B cell (primary cell): ENCODE measurements at regions of chr6 and their contacts with region 1.

Region 1: DNA sequence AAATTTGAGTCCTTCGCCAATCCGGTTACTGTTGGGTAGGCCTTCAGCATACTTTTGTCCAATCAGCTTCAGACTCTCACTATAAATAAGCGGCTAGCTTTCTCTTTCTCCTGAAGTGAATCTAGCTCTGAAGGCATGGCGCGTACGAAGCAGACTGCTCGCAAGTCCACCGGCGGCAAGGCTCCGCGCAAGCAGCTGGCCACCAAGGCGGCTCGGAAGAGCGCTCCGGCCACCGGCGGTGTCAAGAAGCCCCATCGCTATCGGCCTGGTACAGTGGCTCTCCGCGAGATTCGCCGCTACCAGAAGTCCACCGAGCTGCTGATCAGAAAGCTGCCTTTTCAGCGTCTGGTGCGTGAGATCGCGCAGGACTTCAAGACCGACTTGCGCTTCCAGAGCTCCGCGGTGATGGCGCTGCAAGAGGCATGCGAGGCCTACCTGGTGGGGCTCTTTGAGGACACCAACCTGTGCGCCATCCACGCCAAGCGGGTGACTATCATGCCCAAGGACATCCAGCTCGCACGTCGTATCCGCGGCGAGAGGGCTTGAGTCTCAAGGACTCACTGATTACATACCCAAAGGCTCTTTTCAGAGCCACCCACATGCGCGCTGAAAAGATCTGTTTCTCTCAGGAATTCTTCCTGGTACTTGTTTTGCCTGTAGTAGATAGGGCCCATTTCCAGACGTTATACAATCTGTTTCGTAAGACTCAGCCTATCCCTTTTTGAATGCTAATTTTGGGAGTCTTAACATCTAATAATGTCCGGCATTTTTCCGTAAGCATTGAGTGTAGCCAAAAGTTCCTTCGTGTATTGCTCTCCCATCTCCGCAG is 102.0 kb downstream of the OR2B2 start:
- DNase-seq: peak; percentile 96
- ATAC-seq: peak; percentile 50
- H3K4me3 ChIP-seq: peak overlapping the region; percentile 66 to 94 (median 84)
- H3K4me3 Mint-ChIP-seq: peak overlapping the region; percentile 98
- H3K27ac ChIP-seq: peak overlapping the region; percentile 82
- H3K27ac Mint-ChIP-seq: peak overlapping the region; percentile 99
- H3K4me1 ChIP-seq: peaks cover 37 to 47% of the 10 kb centered on the region in 2 donors
- H3K4me1 Mint-ChIP-seq: peaks cover 58% of the 10 kb centered on the region
- H3K27me3 ChIP-seq: no peaks in the 10 kb centered on the region
- H3K27me3 Mint-ChIP-seq: no peaks in the 10 kb centered on the region
- CTCF ChIP-seq: no peak

Region 2: GRCh38 chr6:26031595-26032339 is 1778.4 kb before region 1 on chr6:
- CTCF ChIA-PET with region 1: no interaction called
- POLR2A ChIA-PET with region 1: no interaction called
- intact Hi-C with region 1: loop called (anchors 2 kb)
- DNase-seq: peak; percentile 90
- ATAC-seq: peak; percentile 63
- H3K4me3 ChIP-seq: peak overlapping the region; percentile 67 to 85 (median 69)
- H3K4me3 Mint-ChIP-seq: peak overlapping the region; percentile 96
- H3K27ac ChIP-seq: peak overlapping the region; percentile 76 to 78
- H3K27ac Mint-ChIP-seq: peak overlapping the region; percentile 87
- H3K4me1 ChIP-seq: peaks cover 26 to 36% of the 10 kb centered on the region in 2 donors
- H3K4me1 Mint-ChIP-seq: peaks cover 46% of the 10 kb centered on the region
- H3K27me3 ChIP-seq: no peaks in the 10 kb centered on the region
- H3K27me3 Mint-ChIP-seq: no peaks in the 10 kb centered on the region
- CTCF ChIP-seq: no peak

Region 3: GRCh38 chr6:26329763-26330511 is 1480.2 kb before region 1 on chr6:
- CTCF ChIA-PET with region 1: no interaction called
- POLR2A ChIA-PET with region 1: no interaction called
- intact Hi-C with region 1: loop called (anchors 5 kb)
- DNase-seq: peak; percentile 63
- ATAC-seq: no peak
- H3K4me3 ChIP-seq: no peak overlapping the region
- H3K4me3 Mint-ChIP-seq: peak overlapping the region; percentile 64
- H3K27ac ChIP-seq: no peak overlapping the region
- H3K27ac Mint-ChIP-seq: peak overlapping the region; percentile 73
- H3K4me1 ChIP-seq: peaks cover 23 to 27% of the 10 kb centered on the region in 2 donors
- H3K4me1 Mint-ChIP-seq: peaks cover 26% of the 10 kb centered on the region
- H3K27me3 ChIP-seq: peaks cover 0 to 63% (median 62%) of the 10 kb centered on the region in 4 experiments
- H3K27me3 Mint-ChIP-seq: peaks cover 61% of the 10 kb centered on the region
- CTCF ChIP-seq: no peak

Region 4: DNA sequence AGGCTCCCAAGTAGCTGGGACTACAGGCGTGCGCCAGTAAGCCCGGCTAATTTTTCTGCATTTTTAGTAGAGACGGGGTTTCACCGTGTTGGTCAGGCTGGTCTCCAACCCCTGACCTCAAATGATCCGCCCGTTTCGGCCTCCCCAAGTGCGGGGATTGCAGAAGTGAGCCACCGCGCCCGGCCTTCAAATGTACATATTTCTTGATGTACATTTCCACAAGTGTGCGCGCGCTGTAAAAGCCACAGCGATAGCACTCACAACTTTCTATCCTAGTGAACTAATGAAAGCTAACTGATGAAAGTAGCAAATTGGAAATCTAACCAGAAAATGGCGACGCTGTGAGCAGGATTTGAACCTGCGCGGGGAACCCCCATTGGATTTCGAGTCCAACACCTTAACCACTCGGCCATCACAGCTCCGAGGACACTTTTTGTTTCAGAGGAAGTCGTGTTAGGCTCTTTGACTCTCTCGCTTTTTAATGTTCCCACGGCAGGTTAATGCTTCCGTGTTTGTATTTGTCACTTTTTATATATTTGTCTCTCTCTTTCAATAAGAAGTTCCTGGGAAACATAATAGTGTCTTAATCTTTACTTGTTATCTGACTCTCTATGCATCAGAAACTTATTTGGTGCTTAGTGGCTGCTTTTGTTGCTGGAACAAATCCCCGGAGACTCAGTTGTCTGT is 137.9 kb before region 1 on chr6:
- CTCF ChIA-PET with region 1: no interaction called
- POLR2A ChIA-PET with region 1: no interaction called
- intact Hi-C with region 1: loop called (anchors 5 kb)
- DNase-seq: peak; percentile 48
- ATAC-seq: no peak
- H3K4me3 ChIP-seq: peak overlapping the region in 1 of 5 experiments; percentile 24
- H3K4me3 Mint-ChIP-seq: peak overlapping the region; percentile 23
- H3K27ac ChIP-seq: no peak overlapping the region
- H3K27ac Mint-ChIP-seq: peak overlapping the region; percentile 41
- H3K4me1 ChIP-seq: peaks cover 21 to 22% of the 10 kb centered on the region in 2 donors
- H3K4me1 Mint-ChIP-seq: peaks cover 27% of the 10 kb centered on the region
- H3K27me3 ChIP-seq: peaks cover 0 to 75% (median 61%) of the 10 kb centered on the region in 4 experiments
- H3K27me3 Mint-ChIP-seq: peaks cover 71% of the 10 kb centered on the region
- CTCF ChIP-seq: no peak

Region 5: GRCh38 chr6:27795697-27796494 is 14.3 kb before region 1 on chr6:
- CTCF ChIA-PET with region 1: interaction called, 64 read pairs
- POLR2A ChIA-PET with region 1: no interaction called
- intact Hi-C with region 1: loop called (anchors 1 kb)
- DNase-seq: peak; percentile 89
- ATAC-seq: peak; percentile 59
- H3K4me3 ChIP-seq: no peak overlapping the region
- H3K4me3 Mint-ChIP-seq: no peak overlapping the region
- H3K27ac ChIP-seq: no peak overlapping the region
- H3K27ac Mint-ChIP-seq: peak overlapping the region; percentile 17
- H3K4me1 ChIP-seq: peaks cover 19 to 25% of the 10 kb centered on the region in 2 donors
- H3K4me1 Mint-ChIP-seq: peaks cover 22% of the 10 kb centered on the region
- H3K27me3 ChIP-seq: peaks cover 0 to 10% (median 5%) of the 10 kb centered on the region in 4 experiments
- H3K27me3 Mint-ChIP-seq: peaks cover 12% of the 10 kb centered on the region
- CTCF ChIP-seq: peak; percentile 84

Region 6: GRCh38 chr6:27838058-27838944 is 28.1 kb after region 1 on chr6:
- CTCF ChIA-PET with region 1: interaction called, 22 read pairs
- POLR2A ChIA-PET with region 1: interaction called, 55 read pairs
- intact Hi-C with region 1: loop called (anchors 1 kb)
- DNase-seq: peak; percentile 98
- ATAC-seq: peak; percentile 80
- H3K4me3 ChIP-seq: peak overlapping the region; percentile 82 to 99 (median 90)
- H3K4me3 Mint-ChIP-seq: no peak overlapping the region
- H3K27ac ChIP-seq: peak overlapping the region; percentile 94 to 96
- H3K27ac Mint-ChIP-seq: no peak overlapping the region
- H3K4me1 ChIP-seq: peaks cover 28 to 29% of the 10 kb centered on the region in 2 donors
- H3K4me1 Mint-ChIP-seq: peaks cover 18% of the 10 kb centered on the region
- H3K27me3 ChIP-seq: peaks cover 0 to 4% (median 0%) of the 10 kb centered on the region in 4 experiments
- H3K27me3 Mint-ChIP-seq: no peaks in the 10 kb centered on the region
- CTCF ChIP-seq: no peak

Region 7: GRCh38 chr6:27871924-27872638 is 61.9 kb after region 1 on chr6:
- CTCF ChIA-PET with region 1: interaction called, 34 read pairs
- POLR2A ChIA-PET with region 1: interaction called, 27 read pairs
- intact Hi-C with region 1: loop called (anchors 1 kb)
- DNase-seq: peak; percentile 98
- ATAC-seq: peak; percentile 76
- H3K4me3 ChIP-seq: peak overlapping the region; percentile 66 to 99 (median 76)
- H3K4me3 Mint-ChIP-seq: peak overlapping the region; percentile 84
- H3K27ac ChIP-seq: peak overlapping the region; percentile 79 to 88
- H3K27ac Mint-ChIP-seq: peak overlapping the region; percentile 98
- H3K4me1 ChIP-seq: peaks cover 20 to 34% of the 10 kb centered on the region in 2 donors
- H3K4me1 Mint-ChIP-seq: peaks cover 30% of the 10 kb centered on the region
- H3K27me3 ChIP-seq: no peaks in the 10 kb centered on the region
- H3K27me3 Mint-ChIP-seq: no peaks in the 10 kb centered on the region
- CTCF ChIP-seq: peak; percentile 56